Activated T-helper 2 cell treated with anti-CD3 and anti-CD28 coated beads, Interferon-gamma antibody, Interleukin-2, Interleukin-4, amounts not matched to agents 10 μg/mL and 5 μg/mL and 100 μg/mL, durations not matched to agents 14 hours and 24 hours and 36 hours (primary cell): ENCODE measurements at regions of chr2 and their contacts with region 1.

Region 1: DNA sequence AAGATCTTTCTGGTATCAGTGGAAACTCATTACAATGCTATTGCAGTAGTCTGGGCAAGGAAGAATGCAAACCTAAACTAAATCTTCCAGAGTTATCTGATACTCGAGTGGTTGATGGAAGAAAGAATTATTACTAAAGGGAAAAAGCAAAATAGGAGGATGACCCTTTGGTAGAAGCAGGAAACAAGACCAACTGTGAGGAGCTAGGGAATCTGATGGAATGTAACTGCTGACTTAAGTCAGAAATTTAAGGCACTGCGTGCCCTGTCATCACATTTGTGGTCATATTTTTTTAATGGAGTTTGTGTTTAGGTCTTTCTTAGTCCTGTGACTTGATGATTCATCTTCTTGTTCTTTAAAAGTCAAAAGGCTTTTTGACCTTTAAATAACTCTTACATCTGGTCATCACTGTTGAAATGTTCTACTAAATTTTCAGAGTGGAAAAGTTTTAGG is 36.5 kb upstream of the ARMC9 start:
- DNase-seq: no peak
- H3K4me3 Mint-ChIP-seq: peak overlapping the region; percentile 1
- H3K27ac Mint-ChIP-seq: peak overlapping the region; percentile 73
- H3K4me1 Mint-ChIP-seq: peaks cover 25% of the 10 kb centered on the region
- H3K27me3 Mint-ChIP-seq: no peaks in the 10 kb centered on the region

Region 2: GRCh38 chr2:231068525-231069222 is 93.2 kb before region 1 on chr2:
- intact Hi-C with region 1: loop called (anchors 1 kb)
- DNase-seq: no peak
- H3K4me3 Mint-ChIP-seq: peak overlapping the region; percentile 33
- H3K27ac Mint-ChIP-seq: peak overlapping the region; percentile 85
- H3K4me1 Mint-ChIP-seq: peaks cover 22% of the 10 kb centered on the region
- H3K27me3 Mint-ChIP-seq: no peaks in the 10 kb centered on the region

Region 3: DNA sequence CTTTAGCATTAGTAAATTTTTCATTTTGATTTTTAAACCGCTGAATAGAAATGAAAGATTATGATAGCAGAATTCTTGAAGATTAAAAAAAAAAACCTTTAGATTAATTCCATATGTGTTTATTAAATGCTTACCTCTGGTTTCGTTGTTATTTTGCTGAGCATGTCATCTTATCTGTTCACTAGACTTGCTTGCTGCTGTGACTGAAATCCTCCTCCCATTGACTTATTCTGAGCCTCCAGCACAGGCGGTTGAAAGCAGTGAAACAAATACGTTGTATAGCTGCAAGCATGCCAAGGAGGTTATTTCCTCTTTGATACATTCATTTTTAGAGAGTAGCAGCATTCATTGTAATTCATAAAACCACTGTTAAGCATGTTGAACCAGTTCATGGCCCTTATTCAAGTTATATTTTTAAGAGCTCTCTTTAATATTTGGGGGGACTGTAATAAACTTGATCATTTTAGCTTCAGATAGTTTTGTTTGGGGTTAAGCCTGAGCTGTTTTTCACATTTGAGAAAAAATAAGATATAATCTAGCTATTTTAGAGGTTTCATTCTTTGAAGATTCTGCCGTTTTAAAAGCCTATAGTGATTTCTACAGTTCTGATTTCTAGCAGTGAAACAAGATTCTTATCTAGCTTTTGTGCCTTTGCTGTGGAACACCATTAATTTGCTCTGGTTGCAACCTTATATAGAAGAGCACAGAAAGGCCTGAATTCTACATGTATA is 36.9 kb before region 1 on chr2 and contains the start of gene HTR2B:
- intact Hi-C with region 1: loop called (anchors 5 kb)
- DNase-seq: peak; percentile 27
- H3K4me3 Mint-ChIP-seq: peak within 1 kb of the TSS; percentile 66
- H3K27ac Mint-ChIP-seq: peak within 1 kb of the TSS; percentile 77
- H3K4me1 Mint-ChIP-seq: peaks cover 48% of the 10 kb centered on the region
- H3K27me3 Mint-ChIP-seq: no peaks in the 10 kb centered on the region
- total RNA-seq, gene HTR2B: not detected in 2 replicates